CD14-positive monocyte (primary cell): ENCODE measurements at regions of chr1 and their contacts with region 1.

Region 1: DNA sequence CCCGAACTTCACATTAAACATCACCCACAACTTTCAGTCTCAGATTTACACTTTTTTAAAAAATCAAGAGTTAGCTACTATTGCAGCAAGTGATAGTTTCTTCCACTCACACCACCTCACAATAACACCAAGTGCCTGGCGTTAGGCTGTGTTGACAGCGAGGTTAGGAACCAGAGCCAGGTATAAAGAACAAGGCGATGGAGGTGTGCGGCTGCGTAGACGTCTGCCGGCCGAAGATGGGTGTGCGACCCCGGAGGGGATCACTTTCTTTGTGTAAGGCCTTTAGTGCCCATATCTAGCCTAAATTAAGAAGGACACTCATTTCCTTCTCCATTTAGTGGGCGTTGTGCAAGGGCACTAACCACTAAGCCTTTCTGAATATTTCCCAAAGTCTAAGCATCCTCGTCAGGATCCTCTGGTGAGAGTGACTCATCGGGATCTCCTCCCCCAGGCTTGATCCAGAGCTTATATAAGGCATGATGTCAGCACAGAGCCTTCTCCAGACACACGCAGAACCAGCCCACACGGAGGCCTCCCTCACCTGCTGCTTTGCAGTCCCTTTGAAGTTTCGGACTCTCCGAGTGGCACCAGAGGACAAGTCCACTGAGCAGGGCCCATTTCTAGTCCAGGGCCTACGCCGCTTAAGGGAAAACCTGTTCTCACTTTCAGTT is 11.8 kb downstream of the NHLH2 start:
- DNase-seq: peak; percentile 92 to 97 (median 95)
- H3K4me3 ChIP-seq: peak overlapping the region; percentile 7 to 82 (median 19)
- H3K4me3 Mint-ChIP-seq: peak overlapping the region; percentile 81 to 96
- H3K27ac ChIP-seq: peak overlapping the region in 1 of 2 donors; percentile 88
- H3K27ac Mint-ChIP-seq: peak overlapping the region; percentile 81 to 97 (median 96)
- H3K4me1 ChIP-seq: peaks cover 38 to 49% of the 10 kb centered on the region in 2 donors
- H3K4me1 Mint-ChIP-seq: peaks cover 53% of the 10 kb centered on the region
- H3K27me3 ChIP-seq: no peaks in the 10 kb centered on the region
- H3K27me3 Mint-ChIP-seq: peaks cover 5 to 10% (median 7%) of the 10 kb centered on the region in 3 donors
- CTCF ChIP-seq: no peak

Region 2: DNA sequence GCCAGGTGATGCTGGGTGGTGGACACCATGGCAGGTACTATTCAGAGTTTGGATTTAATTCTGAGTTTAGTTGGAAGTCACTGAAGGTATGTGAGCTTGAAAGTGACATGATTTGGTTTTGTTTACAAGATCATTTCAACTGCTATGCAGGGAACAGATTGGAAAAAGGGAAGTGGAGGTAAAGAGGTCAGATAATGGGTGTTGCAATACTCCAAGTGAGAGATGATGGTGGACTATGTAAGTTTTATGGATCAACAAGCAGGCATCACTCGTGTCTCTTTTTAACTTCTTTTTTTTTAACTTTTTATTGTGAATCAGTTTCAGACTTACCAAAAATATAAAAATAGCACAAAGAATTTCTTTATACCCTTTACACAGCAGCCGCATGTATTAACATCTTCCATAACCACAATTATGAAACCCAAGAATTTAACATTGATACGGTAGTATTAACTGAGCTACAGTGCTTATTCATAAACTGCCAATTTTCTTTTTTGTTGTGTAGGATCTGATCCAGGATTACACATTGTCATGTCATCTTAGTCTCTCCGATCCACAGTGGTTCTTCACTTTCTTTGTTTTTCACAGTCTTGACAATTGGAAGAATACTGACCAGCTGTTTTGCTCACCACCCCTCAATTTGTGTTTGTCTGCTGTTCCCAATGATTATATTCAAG is 36.7 kb after region 1 on chr1:
- intact Hi-C with region 1: loop called in 1 of 2 experiments (anchors 5 kb)
- DNase-seq: peak; percentile 67 to 77 (median 69)
- H3K4me3 ChIP-seq: no peak overlapping the region
- H3K4me3 Mint-ChIP-seq: peak overlapping the region; percentile 32 to 70
- H3K27ac ChIP-seq: peak overlapping the region; percentile 41 to 66
- H3K27ac Mint-ChIP-seq: peak overlapping the region; percentile 58 to 91 (median 87)
- H3K4me1 ChIP-seq: peaks cover 13 to 15% of the 10 kb centered on the region in 2 donors
- H3K4me1 Mint-ChIP-seq: peaks cover 14% of the 10 kb centered on the region
- H3K27me3 ChIP-seq: no peaks in the 10 kb centered on the region
- H3K27me3 Mint-ChIP-seq: peaks cover 1 to 4% (median 2%) of the 10 kb centered on the region in 3 donors
- CTCF ChIP-seq: no peak

Region 3: GRCh38 chr1:115976062-115976920 is 147.1 kb after region 1 on chr1 and contains the start of gene SLC22A15:
- intact Hi-C with region 1: loop called (anchors 5 kb)
- DNase-seq: peak; percentile 89 to 92 (median 91)
- H3K4me3 ChIP-seq: peak within 1 kb of the TSS; percentile 63 to 94 (median 88)
- H3K4me3 Mint-ChIP-seq: peak within 1 kb of the TSS; percentile 90 to 92
- H3K27ac ChIP-seq: peak within 1 kb of the TSS; percentile 88 to 96
- H3K27ac Mint-ChIP-seq: peak within 1 kb of the TSS; percentile 94 to 98 (median 96)
- H3K4me1 ChIP-seq: peaks cover 41 to 54% of the 10 kb centered on the region in 2 donors
- H3K4me1 Mint-ChIP-seq: peaks cover 48% of the 10 kb centered on the region
- H3K27me3 ChIP-seq: no peaks in the 10 kb centered on the region
- H3K27me3 Mint-ChIP-seq: no peaks in the 10 kb centered on the region
- CTCF ChIP-seq: no peak
- polyA plus RNA-seq, gene SLC22A15: 3.2 to 33.4 (median 4.5) TPM